Dendritic cell treated with granulocyte-macrophage colony-stimulating factor and Interleukin-4, amounts not matched to agents 40 ng/mL and 50 ng/mL, for 4 days (primary cell): ENCODE measurements at regions of chr1 and their contacts with region 1.

Region 1: GRCh38 chr1:61043010-61043820 is 39.1 kb upstream of the NFIA start:
- H3K4me3 Mint-ChIP-seq: peak overlapping the region; percentile 80
- H3K27ac Mint-ChIP-seq: no peak overlapping the region
- H3K4me1 Mint-ChIP-seq: peaks cover 12% of the 10 kb centered on the region
- H3K27me3 Mint-ChIP-seq: peaks cover 30% of the 10 kb centered on the region

Region 2: GRCh38 chr1:60281360-60281932 is 761.8 kb before region 1 on chr1:
- intact Hi-C with region 1: loop called (anchors 5 kb)
- H3K4me3 Mint-ChIP-seq: no peak overlapping the region
- H3K27ac Mint-ChIP-seq: no peak overlapping the region
- H3K4me1 Mint-ChIP-seq: no peaks in the 10 kb centered on the region
- H3K27me3 Mint-ChIP-seq: no peaks in the 10 kb centered on the region

Region 3: DNA sequence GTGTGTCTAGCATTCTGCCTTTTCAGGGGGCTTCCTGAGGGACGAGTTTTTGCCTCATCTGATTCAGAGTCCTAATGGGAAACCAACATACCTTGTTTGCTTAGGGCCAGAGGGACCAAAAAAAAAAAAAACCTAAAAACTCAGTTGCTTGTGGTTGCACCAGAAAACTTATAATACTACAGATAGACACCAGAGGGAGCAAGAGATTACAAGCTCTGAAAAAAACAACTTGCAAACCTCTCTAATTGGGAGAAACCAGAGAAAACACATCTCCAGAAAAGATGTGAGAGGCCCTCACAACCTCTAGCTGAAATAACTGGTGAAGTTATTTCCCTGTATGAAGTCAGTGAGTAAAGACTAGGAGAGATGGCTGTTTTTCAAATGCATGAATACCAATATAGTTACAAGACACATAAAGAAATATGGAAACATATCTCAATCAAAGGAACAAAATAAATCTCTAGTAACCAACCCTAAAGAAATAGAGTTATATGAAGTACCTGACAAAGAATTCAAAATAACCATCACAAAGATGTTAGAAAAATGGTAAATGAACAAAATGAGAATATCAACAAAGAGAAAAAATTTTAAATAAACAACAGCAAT is 194.5 kb before region 1 on chr1:
- intact Hi-C with region 1: loop called (anchors 1 kb)
- H3K4me3 Mint-ChIP-seq: no peak overlapping the region
- H3K27ac Mint-ChIP-seq: no peak overlapping the region
- H3K4me1 Mint-ChIP-seq: no peaks in the 10 kb centered on the region
- H3K27me3 Mint-ChIP-seq: no peaks in the 10 kb centered on the region

Region 4: DNA sequence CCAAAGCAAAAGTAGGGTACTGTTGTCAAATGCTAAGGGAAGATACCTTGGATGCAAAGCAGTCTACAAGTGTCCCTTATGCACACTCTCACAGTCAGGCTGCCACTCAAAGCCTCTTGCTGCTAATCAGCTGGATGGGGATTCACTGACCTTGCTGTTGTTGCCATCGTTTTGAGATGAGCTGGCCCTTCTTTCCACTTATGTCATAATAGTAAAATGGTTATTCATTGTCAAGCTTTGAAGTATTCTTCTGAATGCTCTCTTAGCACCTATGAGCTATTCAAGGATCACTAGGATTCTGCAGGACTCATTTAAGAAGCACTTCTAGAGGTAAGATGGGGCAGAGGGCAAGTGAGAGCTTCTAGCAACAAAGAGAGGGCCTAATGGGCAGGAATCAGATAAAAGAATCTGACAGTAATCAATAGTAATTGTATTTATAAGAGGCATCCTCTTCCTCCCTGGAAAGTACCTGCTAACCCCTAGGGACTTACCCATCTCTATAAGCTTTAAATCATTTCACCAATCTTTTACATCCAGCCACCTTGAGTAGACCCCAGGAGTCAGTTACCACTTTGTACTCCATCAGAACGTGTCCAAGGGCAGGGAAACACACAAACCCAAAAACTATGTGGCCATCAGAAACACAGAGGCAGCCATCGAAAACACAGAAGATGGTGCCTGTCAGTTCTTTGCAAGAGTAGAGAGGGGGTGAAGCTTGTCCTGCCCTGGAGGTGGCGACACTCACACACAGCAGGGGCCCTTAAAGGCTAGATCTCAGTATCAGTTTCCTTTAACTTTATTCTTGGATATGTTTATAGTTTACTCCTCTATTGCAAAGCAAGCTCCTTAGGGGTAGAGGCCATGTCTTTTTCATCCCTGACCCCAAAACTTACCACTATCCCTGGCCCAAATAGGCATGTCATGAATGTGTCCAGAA is 64.5 kb before region 1 on chr1:
- intact Hi-C with region 1: loop called (anchors 2 kb)
- H3K4me3 Mint-ChIP-seq: no peak overlapping the region
- H3K27ac Mint-ChIP-seq: no peak overlapping the region
- H3K4me1 Mint-ChIP-seq: no peaks in the 10 kb centered on the region
- H3K27me3 Mint-ChIP-seq: no peaks in the 10 kb centered on the region

Region 5: GRCh38 chr1:61005614-61006580 is 37.3 kb before region 1 on chr1:
- intact Hi-C with region 1: no loop called
- H3K4me3 Mint-ChIP-seq: no peak overlapping the region
- H3K27ac Mint-ChIP-seq: no peak overlapping the region
- H3K4me1 Mint-ChIP-seq: peaks cover 11% of the 10 kb centered on the region
- H3K27me3 Mint-ChIP-seq: no peaks in the 10 kb centered on the region

Region 6: DNA sequence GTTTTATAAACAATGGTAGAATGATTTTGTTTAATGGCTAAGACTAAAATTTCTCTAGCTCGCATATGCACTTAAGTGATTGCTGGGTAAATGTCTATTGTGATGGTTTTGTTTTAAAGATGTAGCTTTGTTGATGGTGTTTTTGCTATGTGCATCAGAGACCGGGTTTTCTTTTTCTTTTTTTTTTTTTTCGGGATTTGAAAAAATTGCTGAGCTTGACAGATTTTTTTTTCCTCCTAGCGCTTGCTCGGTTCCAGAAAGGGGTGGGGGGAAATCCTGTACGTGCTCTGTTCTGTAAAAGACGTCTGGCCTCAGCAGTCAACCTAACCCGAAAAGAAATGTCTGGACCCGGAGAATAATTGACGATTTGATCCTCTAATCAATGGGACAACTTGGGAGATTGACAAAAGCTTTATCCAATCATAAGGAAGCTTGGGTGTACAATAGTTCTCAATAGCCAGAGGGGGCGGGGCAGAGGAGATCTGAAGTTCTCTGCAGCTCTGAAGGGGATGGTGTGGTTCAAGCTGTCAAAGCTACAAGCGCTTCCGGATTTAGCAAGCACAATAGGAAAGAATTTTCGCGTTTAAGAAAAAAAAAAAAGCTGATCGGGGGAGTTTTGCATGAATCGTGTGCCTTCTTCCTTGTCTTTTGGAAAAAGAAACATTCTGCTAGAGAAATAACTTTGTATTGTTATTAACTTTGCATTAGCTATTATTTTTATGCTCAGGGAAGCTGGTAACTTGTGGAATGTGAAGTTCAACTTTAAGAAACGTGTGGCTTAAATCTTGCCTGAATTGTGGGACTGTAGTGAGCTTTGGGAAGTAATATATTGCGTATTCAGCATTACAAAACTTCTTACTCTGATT is 34.7 kb after region 1 on chr1:
- intact Hi-C with region 1: no loop called
- H3K4me3 Mint-ChIP-seq: peak overlapping the region; percentile 90
- H3K27ac Mint-ChIP-seq: peak overlapping the region; percentile 98
- H3K4me1 Mint-ChIP-seq: peaks cover 51% of the 10 kb centered on the region
- H3K27me3 Mint-ChIP-seq: peaks cover 5% of the 10 kb centered on the region